Thyroid gland (tissue), 4 donors: ENCODE measurements at regions of chr4 and their contacts with region 1.

Region 1: GRCh38 chr4:24980064-24980690 is 50.6 kb downstream of the LGI2 start:
- DNase-seq: peak; percentile 47 to 59
- H3K4me3 ChIP-seq: no peak overlapping the region
- H3K27ac ChIP-seq: peak overlapping the region; percentile 11 to 51 (median 39)
- H3K4me1 ChIP-seq: peaks cover 0 to 29% of the 10 kb centered on the region in 2 donors
- H3K27me3 ChIP-seq: no peaks in the 10 kb centered on the region
- CTCF ChIP-seq: peak; percentile 69 to 92 (median 74)
- POLR2A ChIP-seq: no peak

Region 2: DNA sequence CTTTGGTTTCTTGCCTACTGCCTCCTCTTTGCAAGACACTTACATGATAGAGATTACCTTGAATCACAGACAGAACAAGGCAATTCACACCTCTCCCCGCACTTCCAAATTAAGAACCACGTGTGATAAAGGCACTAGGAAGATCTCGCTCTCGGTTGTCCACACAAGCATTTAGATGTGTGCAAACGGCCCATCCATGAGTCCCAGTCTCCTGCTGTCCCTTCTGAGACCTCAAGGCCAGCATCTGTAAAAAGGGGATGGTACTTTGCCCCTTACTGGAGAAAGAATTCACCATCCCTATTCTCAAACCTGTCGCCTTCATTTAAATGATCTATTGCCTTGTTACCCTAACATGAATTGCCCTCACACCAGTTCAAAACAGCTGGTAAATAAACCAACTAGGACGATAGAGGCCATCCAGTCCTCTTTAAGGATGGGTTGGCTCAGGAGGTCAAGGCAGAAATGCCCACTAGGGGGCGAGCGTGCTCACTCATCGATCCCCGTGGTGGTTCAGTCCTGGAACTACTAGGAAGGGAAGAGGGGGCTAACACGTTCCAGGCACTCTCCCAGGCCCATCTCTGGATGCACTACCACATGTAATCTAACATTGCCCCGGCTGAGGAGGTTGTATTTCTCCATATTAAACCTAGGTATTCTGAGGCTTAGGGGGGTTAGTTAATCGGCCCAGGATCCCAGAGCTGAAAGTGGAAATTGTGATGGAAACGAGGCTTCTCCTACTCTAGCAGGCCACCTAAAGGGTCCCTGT is 491.6 kb before region 1 on chr4:
- intact Hi-C with region 1: loop called (anchors 10 kb)
- DNase-seq: peak; percentile 76 to 80
- H3K4me3 ChIP-seq: no peak overlapping the region
- H3K27ac ChIP-seq: no peak overlapping the region
- H3K4me1 ChIP-seq: no peaks in the 10 kb centered on the region
- H3K27me3 ChIP-seq: no peaks in the 10 kb centered on the region
- CTCF ChIP-seq: peak; percentile 49 to 83 (median 76)
- POLR2A ChIP-seq: no peak

Region 3: DNA sequence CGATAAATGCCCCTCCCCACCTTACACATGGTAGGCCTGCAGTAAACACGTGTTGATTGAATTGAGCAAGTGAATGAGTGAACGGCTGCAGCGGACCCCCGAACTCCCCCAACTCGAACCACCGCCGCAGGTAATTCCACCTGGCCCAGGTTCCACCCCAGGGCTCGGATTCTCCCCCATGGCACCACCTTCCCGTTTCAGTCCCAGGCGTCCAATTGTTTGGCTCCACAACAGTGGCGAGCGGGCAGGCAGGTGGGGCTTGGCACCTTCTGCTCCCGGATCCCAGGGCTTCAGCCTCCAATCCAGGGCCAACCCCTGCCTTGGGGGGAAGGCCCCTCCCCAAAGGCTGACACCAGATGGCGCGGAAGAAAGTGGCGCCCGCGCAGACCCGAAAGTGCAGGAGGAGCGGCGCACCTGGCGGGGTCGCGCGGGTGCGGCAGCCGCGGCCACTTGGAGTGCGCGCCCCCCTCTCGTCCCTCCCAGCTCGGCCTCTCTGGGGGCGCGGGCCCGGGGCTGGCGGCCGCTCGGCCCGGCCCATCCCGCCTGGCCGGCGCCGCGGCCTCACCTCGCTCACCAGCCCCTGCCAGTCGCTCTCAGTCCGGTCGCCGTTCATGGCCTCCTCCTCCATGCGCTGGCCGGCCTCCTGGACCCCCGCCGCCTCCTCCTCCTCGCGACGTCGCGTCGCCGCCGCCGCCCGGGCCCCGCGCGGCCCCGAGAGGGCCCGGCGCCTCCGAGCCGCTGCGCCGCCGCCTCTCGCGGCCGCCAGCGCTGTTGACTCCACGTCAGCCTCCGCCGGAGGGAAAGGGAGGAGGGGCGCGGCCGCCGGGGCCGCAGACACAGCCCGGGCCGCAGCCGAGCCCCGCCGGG is 67.7 kb before region 1 on chr4 and contains the start of gene CCDC149:
- intact Hi-C with region 1: loop called (anchors 5 kb)
- DNase-seq: peak; percentile 94 to 95
- H3K4me3 ChIP-seq: peak within 1 kb of the TSS; percentile 24 to 51 (median 50)
- H3K27ac ChIP-seq: peak within 1 kb of the TSS; percentile 86 to 90 (median 90)
- H3K4me1 ChIP-seq: peaks cover 13 to 15% of the 10 kb centered on the region in 2 donors
- H3K27me3 ChIP-seq: no peaks in the 10 kb centered on the region
- CTCF ChIP-seq: peak in 1 of 6 experiments; percentile 21
- POLR2A ChIP-seq: peak; percentile 50 to 96
- total RNA-seq, gene CCDC149: 19.3 to 29.2 (median 21.8) TPM

Region 4: GRCh38 chr4:25144870-25145481 is 164.8 kb after region 1 on chr4:
- intact Hi-C with region 1: loop called (anchors 10 kb)
- DNase-seq: no peak
- H3K4me3 ChIP-seq: no peak overlapping the region
- H3K27ac ChIP-seq: no peak overlapping the region
- H3K4me1 ChIP-seq: no peaks in the 10 kb centered on the region
- H3K27me3 ChIP-seq: no peaks in the 10 kb centered on the region
- CTCF ChIP-seq: peak in 4 of 6 experiments; percentile 36 to 62 (median 55)
- POLR2A ChIP-seq: no peak